ENCODE measurements at regions of chr3 and their contacts with region 1.

Region 1: GRCh38 chr3:107676469-107677309 is 153.9 kb downstream of the BBX start:
- DNase-seq: peak in 4 of 9 donors; percentile 10 to 52 (median 44)
- ATAC-seq: peak; percentile 49
- H3K4me3 ChIP-seq: no peak overlapping the region
- H3K4me3 Mint-ChIP-seq: no peak overlapping the region
- H3K27ac ChIP-seq: no peak overlapping the region
- H3K27ac Mint-ChIP-seq: peak overlapping the region in 4 of 9 donors; percentile 19 to 79 (median 53)
- H3K4me1 ChIP-seq: no peaks in the 10 kb centered on the region
- H3K4me1 Mint-ChIP-seq: peaks cover 21 to 56% (median 48%) of the 10 kb centered on the region in 7 donors
- H3K27me3 ChIP-seq: no peaks in the 10 kb centered on the region
- H3K27me3 Mint-ChIP-seq: peaks cover 0 to 2% (median 0%) of the 10 kb centered on the region in 5 donors

Region 2: DNA sequence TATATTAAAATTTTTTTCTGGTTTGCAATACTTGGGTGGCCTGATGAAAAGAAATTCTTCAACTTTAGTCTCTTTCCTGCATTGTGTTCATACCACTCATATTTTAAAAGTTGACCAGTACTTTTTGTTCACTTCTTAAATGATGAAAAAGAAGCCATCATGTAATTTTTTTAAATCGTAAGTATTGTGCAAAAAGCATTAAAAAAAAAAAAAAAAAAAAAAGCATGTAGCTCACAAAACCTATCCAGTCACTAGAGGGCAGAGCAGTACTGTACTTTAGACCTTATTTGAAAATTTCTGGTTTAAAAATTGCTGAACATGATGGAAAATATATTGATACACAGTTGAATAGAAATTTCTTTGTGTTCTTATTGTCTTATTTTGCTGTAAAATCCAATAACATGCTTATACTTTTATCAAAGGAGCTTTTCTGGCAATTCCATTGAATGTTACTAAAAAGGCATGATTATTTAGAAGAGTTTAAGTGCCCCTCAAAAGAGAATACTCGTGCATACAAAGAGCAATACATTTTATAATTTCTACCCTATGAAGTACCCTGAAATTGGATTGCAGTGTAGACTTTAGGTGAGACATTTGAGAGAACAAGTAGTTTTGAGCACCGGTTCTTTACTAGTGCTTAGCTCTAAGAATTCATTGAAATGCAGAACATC is 16.2 kb before region 1 on chr3:
- CTCF ChIA-PET with region 1: interaction called, 44 read pairs
- POLR2A ChIA-PET with region 1: no interaction called
- intact Hi-C with region 1: loop called in 1 of 2 experiments (anchors 2 kb)
- DNase-seq: peak in 6 of 9 donors; percentile 11 to 43 (median 34)
- ATAC-seq: peak; percentile 67
- H3K4me3 ChIP-seq: no peak overlapping the region
- H3K4me3 Mint-ChIP-seq: no peak overlapping the region
- H3K27ac ChIP-seq: no peak overlapping the region
- H3K27ac Mint-ChIP-seq: no peak overlapping the region
- H3K4me1 ChIP-seq: peaks cover 0 to 13% of the 10 kb centered on the region in 2 donors
- H3K4me1 Mint-ChIP-seq: peaks cover 15 to 45% (median 31%) of the 10 kb centered on the region in 7 donors
- H3K27me3 ChIP-seq: no peaks in the 10 kb centered on the region
- H3K27me3 Mint-ChIP-seq: no peaks in the 10 kb centered on the region

Region 3: DNA sequence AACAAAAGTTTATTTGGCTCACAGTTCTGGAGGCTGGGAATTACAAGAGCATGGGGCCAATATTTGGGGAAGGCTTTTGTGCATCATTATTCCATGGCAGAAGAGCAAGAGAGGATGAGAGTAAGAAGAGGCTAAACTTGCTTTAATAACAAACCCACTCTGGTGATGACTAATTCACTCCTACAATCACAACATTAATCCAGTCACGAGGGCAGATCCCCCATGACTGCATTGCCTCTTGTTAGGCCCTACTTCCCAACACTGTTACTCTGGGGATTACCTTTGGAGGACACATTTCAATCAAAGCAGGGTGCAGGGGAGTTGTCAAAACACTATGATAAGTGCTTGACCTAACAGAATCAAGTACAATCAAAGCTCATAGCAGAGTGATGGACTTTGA is 27.8 kb after region 1 on chr3:
- CTCF ChIA-PET with region 1: interaction called, 15 read pairs
- POLR2A ChIA-PET with region 1: no interaction called
- intact Hi-C with region 1: no loop called
- DNase-seq: no peak
- ATAC-seq: no peak
- H3K4me3 ChIP-seq: no peak overlapping the region
- H3K4me3 Mint-ChIP-seq: no peak overlapping the region
- H3K27ac ChIP-seq: no peak overlapping the region
- H3K27ac Mint-ChIP-seq: peak overlapping the region in 1 of 9 donors; percentile 15
- H3K4me1 ChIP-seq: peaks cover 0 to 4% of the 10 kb centered on the region in 2 donors
- H3K4me1 Mint-ChIP-seq: peaks cover 0 to 62% (median 42%) of the 10 kb centered on the region in 7 donors
- H3K27me3 ChIP-seq: no peaks in the 10 kb centered on the region
- H3K27me3 Mint-ChIP-seq: no peaks in the 10 kb centered on the region

Region 4: DNA sequence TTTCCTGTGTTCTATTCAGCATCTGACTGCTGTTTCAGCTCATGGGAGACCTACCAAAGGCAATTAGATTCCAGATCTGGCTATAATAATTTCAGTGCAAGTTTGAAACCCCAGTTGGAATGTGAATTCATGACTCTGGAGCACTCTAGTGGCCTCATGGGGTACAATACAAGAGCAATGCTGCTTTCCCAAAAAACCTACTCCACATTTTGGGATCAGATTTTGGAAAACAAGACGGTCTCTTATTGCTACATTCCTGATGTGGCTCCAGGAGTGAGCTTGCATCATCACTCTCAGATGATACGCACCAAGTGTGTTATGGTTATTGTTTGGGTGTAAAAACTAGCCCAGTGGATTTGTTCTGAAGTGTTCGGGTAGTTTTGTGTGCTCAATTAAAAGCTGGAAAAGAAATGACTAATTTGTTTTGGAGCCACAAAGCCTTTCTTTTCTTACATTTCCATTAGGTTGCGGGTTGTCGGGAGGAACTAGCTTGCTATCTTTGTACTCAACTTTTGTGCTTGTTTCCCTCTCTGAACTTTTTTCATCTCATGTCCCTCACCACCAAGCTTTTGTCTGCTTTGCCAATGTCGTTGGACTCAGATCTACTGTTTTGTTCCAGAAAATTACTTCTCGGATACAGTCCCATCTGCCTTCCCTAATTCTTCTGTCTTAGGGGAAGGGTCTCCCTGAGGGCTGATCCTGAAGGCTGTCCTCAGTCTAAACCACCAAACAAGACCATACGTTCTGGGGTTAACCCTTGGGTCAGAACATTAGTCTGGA is 118.2 kb after region 1 on chr3:
- CTCF ChIA-PET with region 1: no interaction called
- POLR2A ChIA-PET with region 1: no interaction called
- intact Hi-C with region 1: loop called in 1 of 2 experiments (anchors 5 kb)
- DNase-seq: no peak
- ATAC-seq: no peak
- H3K4me3 ChIP-seq: no peak overlapping the region
- H3K4me3 Mint-ChIP-seq: no peak overlapping the region
- H3K27ac ChIP-seq: no peak overlapping the region
- H3K27ac Mint-ChIP-seq: peak overlapping the region in 5 of 9 donors; percentile 27 to 79 (median 51)
- H3K4me1 ChIP-seq: peaks cover 6 to 7% of the 10 kb centered on the region in 2 donors
- H3K4me1 Mint-ChIP-seq: peaks cover 6 to 23% (median 19%) of the 10 kb centered on the region in 7 donors
- H3K27me3 ChIP-seq: no peaks in the 10 kb centered on the region
- H3K27me3 Mint-ChIP-seq: no peaks in the 10 kb centered on the region

Region 5: DNA sequence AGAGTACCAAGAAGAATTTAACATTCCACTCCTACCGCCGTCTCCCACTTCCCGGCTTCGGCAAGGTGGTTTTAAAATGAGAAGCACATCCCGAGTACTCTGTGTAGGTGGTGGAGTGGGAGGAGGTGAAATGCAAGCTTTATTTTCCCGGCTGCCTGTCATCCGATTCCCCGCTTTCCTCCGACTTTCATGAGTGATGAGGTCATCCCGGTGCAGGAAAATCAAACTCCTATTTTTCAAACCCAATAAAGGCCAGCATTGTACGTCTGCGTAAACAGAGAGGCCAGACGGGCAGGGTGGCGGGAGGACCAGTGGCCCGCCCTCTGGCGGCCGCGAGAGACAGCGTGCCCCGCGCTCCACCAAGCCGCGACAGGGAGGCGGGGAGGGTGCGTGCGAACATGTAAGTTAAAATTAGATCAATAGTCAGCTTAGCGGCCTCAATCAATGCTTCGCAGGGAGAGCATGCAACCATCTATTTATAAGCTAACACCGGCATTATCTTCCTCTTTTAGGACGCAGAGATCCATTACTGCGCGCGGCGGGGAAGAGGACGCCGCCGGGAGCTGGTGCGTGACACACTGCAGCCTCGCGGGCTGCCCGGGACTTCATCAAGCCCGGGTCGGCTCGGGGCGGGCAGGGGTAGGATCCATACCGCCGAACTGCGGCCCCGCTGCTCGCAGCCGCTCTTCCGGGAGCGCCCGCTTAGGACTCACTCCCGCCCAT is 250.8 kb after region 1 on chr3:
- CTCF ChIA-PET with region 1: interaction called, 3 read pairs
- POLR2A ChIA-PET with region 1: no interaction called
- intact Hi-C with region 1: loop called (anchors 1 to 5 kb)
- DNase-seq: peak; percentile 39 to 71 (median 57)
- ATAC-seq: peak; percentile 92
- H3K4me3 ChIP-seq: peak overlapping the region; percentile 60
- H3K4me3 Mint-ChIP-seq: peak overlapping the region; percentile 86 to 93 (median 89)
- H3K27ac ChIP-seq: no peak overlapping the region
- H3K27ac Mint-ChIP-seq: peak overlapping the region in 5 of 9 donors; percentile 26 to 88 (median 64)
- H3K4me1 ChIP-seq: peaks cover 5 to 6% of the 10 kb centered on the region in 2 donors
- H3K4me1 Mint-ChIP-seq: peaks cover 9 to 15% (median 13%) of the 10 kb centered on the region in 7 donors
- H3K27me3 ChIP-seq: peaks cover 0 to under 1% of the 10 kb centered on the region in 2 donors
- H3K27me3 Mint-ChIP-seq: peaks cover 0 to 17% (median 4%) of the 10 kb centered on the region in 5 donors

Region 6: GRCh38 chr3:108406661-108407206 is 730.0 kb after region 1 on chr3:
- CTCF ChIA-PET with region 1: interaction called, 3 read pairs
- POLR2A ChIA-PET with region 1: no interaction called
- intact Hi-C with region 1: loop called (anchors 1 to 10 kb)
- DNase-seq: peak in 4 of 9 donors; percentile 18 to 57 (median 50)
- ATAC-seq: peak; percentile 82
- H3K4me3 ChIP-seq: no peak overlapping the region
- H3K4me3 Mint-ChIP-seq: no peak overlapping the region
- H3K27ac ChIP-seq: no peak overlapping the region
- H3K27ac Mint-ChIP-seq: peak overlapping the region in 1 of 9 donors; percentile 2
- H3K4me1 ChIP-seq: no peaks in the 10 kb centered on the region
- H3K4me1 Mint-ChIP-seq: peaks cover 0 to 6% (median 2%) of the 10 kb centered on the region in 7 donors
- H3K27me3 ChIP-seq: no peaks in the 10 kb centered on the region
- H3K27me3 Mint-ChIP-seq: peaks cover 0 to 6% (median 0%) of the 10 kb centered on the region in 5 donors

Region 7: GRCh38 chr3:108552267-108553159 is 875.8 kb after region 1 on chr3:
- CTCF ChIA-PET with region 1: interaction called, 3 read pairs
- POLR2A ChIA-PET with region 1: no interaction called
- intact Hi-C with region 1: loop called (anchors 5 kb)
- DNase-seq: peak in 7 of 9 donors; percentile 4 to 40 (median 28)
- ATAC-seq: peak; percentile 66
- H3K4me3 ChIP-seq: no peak overlapping the region
- H3K4me3 Mint-ChIP-seq: no peak overlapping the region
- H3K27ac ChIP-seq: no peak overlapping the region
- H3K27ac Mint-ChIP-seq: no peak overlapping the region
- H3K4me1 ChIP-seq: no peaks in the 10 kb centered on the region
- H3K4me1 Mint-ChIP-seq: peaks cover 0 to 12% (median 0%) of the 10 kb centered on the region in 7 donors
- H3K27me3 ChIP-seq: no peaks in the 10 kb centered on the region
- H3K27me3 Mint-ChIP-seq: no peaks in the 10 kb centered on the region